ENCODE measurements at regions of chr7 and their contacts with region 1.

Region 1: GRCh38 chr7:22559829-22560489 is 60.0 kb upstream of the STEAP1B start:
- DNase-seq: peak; percentile 76
- H3K4me3 ChIP-seq: no peak overlapping the region
- H3K27ac ChIP-seq: no peak overlapping the region
- H3K27me3 ChIP-seq: no peaks in the 10 kb centered on the region
- CTCF ChIP-seq: peak; percentile 91

Region 2: DNA sequence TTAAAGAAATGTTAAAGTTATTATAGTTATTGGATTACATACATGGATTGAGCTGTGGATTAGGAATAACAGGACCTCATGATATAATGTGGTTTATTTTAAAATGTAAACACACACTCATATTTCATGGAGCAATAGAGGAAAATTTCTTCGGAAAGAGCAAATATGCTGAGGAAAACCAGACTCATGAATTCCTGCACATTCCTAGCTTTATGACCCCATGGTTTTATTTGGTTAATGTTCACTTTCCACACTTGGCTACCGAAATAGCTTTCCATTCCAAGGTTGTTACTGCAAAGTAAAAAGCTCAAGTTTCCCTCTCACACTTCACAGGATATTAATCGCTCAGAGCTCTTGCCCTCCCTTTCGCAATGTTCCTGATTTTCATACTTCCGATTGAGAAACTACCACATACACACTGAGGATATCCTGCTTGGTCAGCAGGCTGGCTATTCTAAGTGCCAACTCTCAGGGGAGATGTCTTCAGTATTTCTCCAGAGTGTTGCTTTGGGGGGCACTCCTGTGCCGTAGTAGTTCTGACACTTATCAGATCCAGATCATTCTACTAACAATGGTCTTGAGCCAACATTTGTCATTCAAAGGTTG is 17.5 kb after region 1 on chr7:
- CTCF ChIA-PET with region 1: interaction called, 20 read pairs
- POLR2A ChIA-PET with region 1: interaction called, 50 read pairs
- DNase-seq: peak; percentile 91
- H3K4me3 ChIP-seq: no peak overlapping the region
- H3K27ac ChIP-seq: peak overlapping the region; percentile 90
- H3K27me3 ChIP-seq: no peaks in the 10 kb centered on the region
- CTCF ChIP-seq: no peak

Region 3: GRCh38 chr7:22726345-22727185 is 166.6 kb after region 1 on chr7:
- CTCF ChIA-PET with region 1: interaction called, 174 read pairs
- POLR2A ChIA-PET with region 1: interaction called, 16 read pairs
- DNase-seq: peak; percentile 83
- H3K4me3 ChIP-seq: peak overlapping the region; percentile 76
- H3K27ac ChIP-seq: peak overlapping the region; percentile 97
- H3K27me3 ChIP-seq: no peaks in the 10 kb centered on the region
- CTCF ChIP-seq: peak; percentile 66

Region 4: DNA sequence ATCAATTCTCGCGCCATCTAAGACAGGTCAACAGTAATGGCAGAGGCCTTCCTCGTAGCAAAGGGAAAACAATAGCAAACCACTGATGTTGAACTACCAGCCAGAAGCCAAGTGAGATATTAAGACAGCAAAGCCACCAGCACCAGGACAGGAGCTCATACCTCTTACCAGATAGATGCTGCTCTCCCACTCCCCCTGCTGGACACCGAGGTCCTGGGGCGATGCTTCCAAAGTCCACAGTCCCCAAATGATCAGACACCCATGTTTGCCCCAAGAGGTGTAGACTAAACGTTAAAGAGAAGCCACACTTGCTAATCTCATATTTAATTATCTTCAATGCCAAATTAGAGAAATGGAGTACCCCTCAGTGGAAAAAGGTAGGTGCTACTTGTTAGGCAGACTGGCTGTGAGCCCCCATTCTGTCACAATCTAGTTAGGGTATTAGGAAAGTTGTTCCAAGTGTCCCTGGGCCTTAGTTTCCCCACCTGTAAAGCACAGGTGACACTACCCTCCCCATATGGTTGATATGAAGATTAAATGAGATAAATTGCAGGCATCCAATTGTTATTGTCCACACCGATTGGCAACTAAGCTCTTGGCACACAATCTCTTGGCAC is 222.8 kb after region 1 on chr7:
- CTCF ChIA-PET with region 1: interaction called, 36 read pairs
- POLR2A ChIA-PET with region 1: no interaction called
- DNase-seq: no peak
- H3K4me3 ChIP-seq: no peak overlapping the region
- H3K27ac ChIP-seq: no peak overlapping the region
- H3K27me3 ChIP-seq: no peaks in the 10 kb centered on the region
- CTCF ChIP-seq: peak; percentile 69

Region 5: DNA sequence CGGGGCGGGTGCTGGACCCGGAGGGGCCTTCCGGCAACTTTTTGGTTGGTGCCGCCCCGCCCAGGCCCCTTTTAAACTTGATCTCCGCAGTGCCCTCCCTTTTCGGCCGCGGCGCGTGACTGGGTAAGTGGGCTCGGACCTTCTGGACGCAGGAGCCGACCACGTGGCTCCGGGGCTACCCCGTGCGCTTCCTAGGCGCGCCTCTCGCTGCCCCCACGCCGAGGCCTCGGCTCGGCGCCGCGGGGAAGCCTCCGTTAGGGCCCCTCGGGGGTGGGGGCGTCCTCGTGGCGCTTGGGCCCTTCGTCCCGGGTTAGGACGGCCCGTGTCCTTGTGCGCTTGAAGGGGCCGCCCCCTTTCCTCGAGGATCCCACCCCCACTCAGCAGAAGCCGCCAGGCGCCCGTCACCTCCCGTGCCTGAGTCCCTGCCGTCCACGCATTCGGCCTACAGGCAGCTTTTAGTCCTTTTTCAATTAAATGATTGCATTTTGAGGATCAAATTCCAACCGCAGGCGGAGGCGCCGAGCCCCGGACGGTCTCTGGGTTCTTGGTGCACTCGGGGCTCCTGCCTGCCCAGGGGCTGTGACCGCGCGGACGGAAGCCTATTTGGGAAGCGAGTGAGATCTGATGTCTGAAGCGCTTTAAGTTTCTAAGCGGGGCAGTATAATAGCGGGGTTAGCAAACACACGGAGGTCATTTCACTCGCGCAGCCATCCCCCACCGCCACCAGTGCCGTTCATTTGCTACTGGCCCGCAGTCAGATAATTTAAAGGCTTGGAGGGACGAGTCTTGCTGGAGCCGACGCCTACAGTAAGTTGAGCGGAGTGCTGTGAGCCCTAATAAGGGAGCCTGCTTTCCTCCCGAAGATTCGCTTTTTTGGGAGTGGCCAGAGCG is 294.4 kb after region 1 on chr7:
- CTCF ChIA-PET with region 1: interaction called, 6 read pairs
- POLR2A ChIA-PET with region 1: interaction called, 19 read pairs
- DNase-seq: no peak
- H3K4me3 ChIP-seq: peak overlapping the region; percentile 69
- H3K27ac ChIP-seq: peak overlapping the region; percentile 93
- H3K27me3 ChIP-seq: no peaks in the 10 kb centered on the region
- CTCF ChIP-seq: no peak; the same call in none of the 2 replicates

Measured in AG04450 (cell line).